ENCODE measurements at regions of chr11 and their contacts with region 1.

Region 1: DNA sequence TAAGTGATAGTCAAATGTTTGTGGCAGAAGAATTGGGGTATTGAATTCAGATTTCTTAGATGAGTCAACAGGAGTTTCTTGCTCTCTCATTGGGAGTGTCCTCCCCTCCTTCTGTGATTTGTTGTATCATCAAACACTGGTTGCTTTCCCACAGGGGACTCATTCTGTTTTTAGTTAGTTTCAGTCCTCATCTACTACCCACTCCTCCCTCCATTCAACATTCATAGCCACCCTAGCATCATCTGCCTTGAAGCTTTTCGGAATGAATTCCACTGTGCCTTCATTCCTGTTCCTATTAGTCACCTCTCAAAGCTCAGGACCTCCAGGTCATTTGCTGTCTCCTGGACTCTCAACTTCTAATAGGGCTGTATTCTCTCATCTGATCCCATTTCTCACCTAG is 31.5 kb upstream of the RAB38 start:
- ATAC-seq: peak in 2 of 8 experiments; percentile 91 to 93
- H3K4me3 ChIP-seq: no peak overlapping the region
- H3K27ac ChIP-seq: no peak overlapping the region
- H3K4me1 ChIP-seq: no peaks in the 10 kb centered on the region

Region 2: GRCh38 chr11:88103337-88104206 is 103.2 kb before region 1 on chr11:
- in situ Hi-C with region 1: loop called in 1 of 9 experiments (anchors 25 kb)
- ATAC-seq: peak in 3 of 8 experiments; percentile 33 to 83 (median 34)
- H3K4me3 ChIP-seq: no peak overlapping the region
- H3K27ac ChIP-seq: no peak overlapping the region
- H3K4me1 ChIP-seq: peaks cover 9 to 21% of the 10 kb centered on the region in 2 donors

Region 3: DNA sequence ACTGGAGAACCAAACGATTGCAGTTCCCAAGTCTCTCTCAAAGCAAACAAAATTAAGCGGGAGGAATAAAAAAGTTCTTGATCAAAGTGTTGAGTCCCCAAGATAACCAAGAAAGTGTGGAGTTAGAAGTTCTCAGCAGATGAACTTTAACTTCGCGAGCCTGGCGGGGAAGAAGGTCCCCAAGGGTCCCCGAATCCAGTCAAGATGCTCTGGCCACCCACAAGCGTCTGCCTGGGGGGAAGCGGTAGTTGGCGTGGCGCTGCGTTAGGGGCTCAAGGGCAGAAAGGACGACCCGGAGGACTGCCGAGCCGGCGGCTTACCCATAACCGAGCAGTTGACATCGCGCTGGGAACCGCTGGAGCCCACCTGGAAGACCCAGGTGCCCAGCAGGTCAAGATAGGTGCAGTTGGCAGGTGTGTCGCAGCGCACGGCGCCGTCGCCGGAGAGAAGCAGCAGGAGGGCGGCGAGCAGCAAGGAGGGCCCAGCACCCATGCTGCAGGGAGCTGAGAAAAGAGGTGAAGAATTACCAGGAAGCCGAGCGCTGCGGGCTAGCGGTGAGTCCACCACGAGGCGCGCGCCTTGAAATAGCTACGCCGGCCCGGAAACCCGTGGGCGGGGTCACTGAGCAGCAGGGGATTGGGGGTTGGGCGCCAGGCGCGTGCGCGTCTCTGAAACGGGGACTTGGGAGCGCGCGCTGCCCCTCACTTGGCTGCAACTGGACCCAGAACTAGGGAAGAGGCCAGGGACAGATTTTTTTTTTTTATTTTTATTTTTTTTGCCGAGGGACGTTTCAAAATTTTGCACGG is 130.6 kb after region 1 on chr11 and contains the start of gene CTSC:
- in situ Hi-C with region 1: no loop called
- ATAC-seq: peak; percentile 92 to 99 (median 98)
- H3K4me3 ChIP-seq: peak within 1 kb of the TSS; percentile 46 to 83 (median 70)
- H3K27ac ChIP-seq: no peak within 1 kb of the TSS
- H3K4me1 ChIP-seq: peaks cover 3 to 7% of the 10 kb centered on the region in 2 donors
- total RNA-seq, gene CTSC: 7.2 to 199 (median 32.4) TPM

Measured in motor neuron (in vitro differentiated cells).